ENCODE measurements at regions of chr14 and their contacts with region 1.

Region 1: DNA sequence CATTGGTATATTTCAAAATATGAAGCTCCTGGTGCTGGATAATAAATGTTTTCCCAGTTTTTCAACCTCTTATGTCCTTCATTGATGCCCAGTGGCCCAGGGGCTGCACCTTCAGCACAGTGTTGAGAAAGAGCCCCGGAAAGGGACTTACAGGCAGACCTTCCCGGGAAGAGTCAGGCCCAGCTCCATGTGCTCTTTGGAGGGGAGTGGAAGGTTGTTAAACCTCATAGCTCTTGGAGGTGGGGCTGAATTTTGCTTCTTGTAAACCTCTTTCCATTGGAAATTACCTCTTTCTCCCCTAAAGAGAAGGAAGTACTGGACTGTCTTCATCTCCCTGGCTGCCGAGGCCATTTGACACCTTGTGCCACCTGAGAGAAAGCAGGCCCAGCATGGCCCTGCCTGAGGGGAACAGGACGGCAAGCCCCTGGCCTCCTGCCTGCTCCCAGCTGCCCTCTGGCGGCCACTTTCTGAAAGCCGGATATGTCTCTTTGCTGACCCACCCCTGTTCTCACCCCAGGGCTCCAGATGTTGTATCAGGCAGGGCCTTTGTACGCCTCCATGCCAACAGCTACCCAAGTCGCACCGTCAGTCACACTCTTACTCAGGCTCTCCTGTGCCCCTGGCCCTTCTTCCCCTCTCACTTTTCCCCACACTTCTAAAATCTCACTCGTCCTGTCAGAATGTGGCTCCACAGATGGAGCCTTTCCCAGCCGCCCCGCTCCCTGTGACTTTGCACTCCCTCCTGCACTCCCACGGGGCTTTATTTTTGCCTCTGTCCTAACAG is 43.0 kb downstream of the EVL start:
- DNase-seq: peak; percentile 69 to 88
- ATAC-seq: peak; percentile 91 to 98
- H3K4me3 ChIP-seq: no peak overlapping the region
- H3K27ac ChIP-seq: peak overlapping the region; percentile 51 to 56; a peak in 4 of 6 replicates
- H3K4me1 ChIP-seq: peaks cover 27% of the 10 kb centered on the region
- CTCF ChIP-seq: peak; percentile 90
- EP300 ChIP-seq: no peak
- POLR2A ChIP-seq: no peak
- RAD21 ChIP-seq: peak; percentile 86 to 88

Region 2: DNA sequence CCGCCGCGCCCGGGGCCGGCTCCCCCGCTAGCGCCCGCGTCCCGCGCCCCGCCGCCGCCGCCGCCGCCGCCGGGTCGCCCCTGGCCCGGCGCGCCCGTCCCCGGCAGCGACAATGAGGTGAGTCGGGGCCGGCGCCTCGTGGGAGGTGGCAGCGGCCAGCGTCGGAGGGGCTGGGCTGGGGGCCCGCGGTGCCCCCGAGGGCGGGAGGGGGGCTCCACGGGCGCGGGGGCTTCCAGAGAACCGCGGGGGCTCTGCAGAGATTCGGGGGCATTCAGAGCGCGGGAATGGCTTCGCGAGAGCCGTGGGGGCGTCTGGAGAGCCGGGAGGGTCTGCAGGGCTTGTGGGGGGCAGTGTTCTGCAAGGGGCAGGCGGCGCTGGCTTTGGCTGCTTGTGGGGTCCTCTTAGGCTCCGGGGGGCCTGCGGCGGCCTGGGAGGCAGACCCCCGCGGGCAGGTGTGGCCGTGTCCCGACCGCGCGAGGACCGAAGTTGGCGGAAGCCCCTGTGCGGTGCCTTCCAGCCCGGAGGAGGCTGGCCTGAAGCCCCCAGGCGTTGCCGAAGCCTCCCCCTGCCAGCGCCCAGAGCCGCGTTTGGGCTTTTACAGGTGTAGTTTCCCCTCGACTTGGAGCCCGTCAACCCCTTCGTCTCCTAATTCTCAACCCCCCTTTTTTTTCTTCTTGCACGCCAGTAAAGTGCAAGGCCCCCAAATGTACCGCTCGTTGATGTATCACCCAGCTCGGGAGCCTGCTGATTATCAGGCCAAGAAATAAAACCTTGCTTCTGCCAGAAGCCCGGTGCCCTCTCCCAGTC is 136.1 kb before region 1 on chr14:
- CTCF ChIA-PET with region 1: interaction called, 18 read pairs
- POLR2A ChIA-PET with region 1: no interaction called
- DNase-seq: peak in 1 of 2 experiments; percentile 43
- ATAC-seq: peak; percentile 21 to 35; a peak in 5 of 6 replicates
- H3K4me3 ChIP-seq: peak overlapping the region; percentile 83
- H3K27ac ChIP-seq: peak overlapping the region; percentile 79 to 87
- H3K4me1 ChIP-seq: 0 out of 3 replicates have a peak, but pooled peaks cover 3% of the 10 kb centered on the region
- CTCF ChIP-seq: no peak
- EP300 ChIP-seq: no peak
- POLR2A ChIP-seq: no peak
- RAD21 ChIP-seq: no peak

Region 3: DNA sequence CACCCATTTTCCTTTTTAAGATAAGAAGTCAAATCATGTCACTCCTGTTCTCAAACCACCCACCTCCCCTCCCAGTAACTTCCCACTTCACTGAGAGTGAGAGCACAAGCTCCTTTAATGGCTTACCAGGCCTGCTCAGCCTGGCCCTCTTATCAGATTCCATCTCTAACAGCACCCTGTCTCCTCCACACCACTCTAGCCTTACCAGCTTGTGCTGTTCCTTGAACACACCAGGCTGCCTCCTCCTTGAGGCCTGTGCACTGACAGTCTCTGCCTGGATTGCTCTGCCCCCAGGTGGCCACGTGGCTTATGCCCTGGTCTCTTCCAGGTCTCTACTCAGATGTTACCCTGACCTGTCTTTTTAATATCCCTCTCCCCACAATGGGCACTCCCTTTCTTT is 83.1 kb before region 1 on chr14:
- CTCF ChIA-PET with region 1: interaction called, 29 read pairs
- POLR2A ChIA-PET with region 1: no interaction called
- DNase-seq: peak; percentile 49 to 73
- ATAC-seq: peak; percentile 94 to 95
- H3K4me3 ChIP-seq: no peak overlapping the region
- H3K27ac ChIP-seq: peak overlapping the region; percentile 45 to 67; a peak in 4 of 6 replicates
- H3K4me1 ChIP-seq: peaks cover 41% of the 10 kb centered on the region
- CTCF ChIP-seq: peak; percentile 62
- EP300 ChIP-seq: no peak
- POLR2A ChIP-seq: no peak
- RAD21 ChIP-seq: peak; percentile 67 to 79

Region 4: DNA sequence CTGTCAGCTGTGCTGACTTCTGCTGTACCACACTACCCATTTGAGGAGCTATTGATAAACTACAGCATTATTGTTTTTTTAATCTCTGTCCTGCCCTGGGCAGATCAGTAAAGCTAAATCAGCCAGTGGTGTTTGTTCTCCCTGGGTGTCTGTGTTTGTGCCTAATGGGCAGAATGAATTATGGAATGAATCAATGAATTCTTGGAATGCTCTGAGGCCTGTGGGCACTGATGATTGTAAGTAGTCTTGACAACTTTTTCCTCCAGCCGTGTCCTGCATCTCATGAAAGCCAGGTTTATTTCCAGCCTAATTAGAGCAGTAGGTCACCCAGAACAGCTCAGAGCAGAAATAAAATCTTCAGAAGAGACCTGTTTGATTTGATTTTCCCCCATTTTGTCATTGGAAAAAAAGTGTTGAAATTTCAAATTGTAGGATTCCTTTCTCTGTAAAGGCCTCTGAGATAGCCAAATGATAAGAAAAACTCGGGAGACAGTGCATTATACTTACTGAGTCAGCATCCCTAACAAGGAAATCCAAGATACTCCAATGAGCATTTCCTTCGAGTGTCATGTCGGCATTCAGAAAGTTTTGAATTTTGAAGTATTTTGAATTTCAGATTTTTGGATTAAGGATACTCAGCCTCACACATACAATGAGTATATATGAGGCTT is 62.5 kb before region 1 on chr14:
- CTCF ChIA-PET with region 1: interaction called, 12 read pairs
- POLR2A ChIA-PET with region 1: no interaction called
- DNase-seq: no peak
- ATAC-seq: no peak
- H3K4me3 ChIP-seq: no peak overlapping the region
- H3K27ac ChIP-seq: 0 out of 6 replicates have a peak overlapping the region, but pooled peaks of 1 of the 2 experiments have one; percentile 3
- H3K4me1 ChIP-seq: peaks cover 13% of the 10 kb centered on the region; the same call in 2 of the 3 replicates
- CTCF ChIP-seq: no peak
- EP300 ChIP-seq: no peak
- POLR2A ChIP-seq: no peak
- RAD21 ChIP-seq: no peak

Region 5: DNA sequence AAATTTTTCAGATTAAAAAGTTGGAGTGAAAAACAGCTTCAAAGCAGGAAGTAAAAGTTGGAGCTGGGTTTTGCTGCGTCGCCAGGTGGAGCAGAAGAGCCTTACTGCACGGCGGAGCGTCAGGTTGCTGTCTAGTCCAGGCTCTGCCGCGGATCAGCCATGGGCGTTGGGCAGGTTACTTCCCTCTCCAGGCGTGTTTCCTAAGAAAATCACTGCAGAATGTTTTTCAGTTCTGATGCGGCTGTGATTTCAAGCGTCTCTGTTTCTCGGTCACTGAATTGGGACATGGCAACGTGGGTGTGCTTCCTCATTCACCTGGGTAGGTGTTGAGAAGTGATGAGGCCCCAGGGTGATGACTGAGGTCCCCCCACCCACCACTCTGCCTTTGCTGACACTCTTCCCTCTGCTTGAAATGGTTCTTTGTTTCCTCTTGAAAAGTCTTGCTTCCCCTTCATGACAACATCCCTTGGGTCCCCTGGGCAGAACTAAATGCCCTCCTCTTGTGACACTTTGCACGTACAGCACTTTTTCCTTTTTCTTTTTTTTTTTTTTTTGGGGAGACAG is 35.4 kb before region 1 on chr14:
- CTCF ChIA-PET with region 1: interaction called, 52 read pairs
- POLR2A ChIA-PET with region 1: no interaction called
- DNase-seq: no peak
- ATAC-seq: no peak
- H3K4me3 ChIP-seq: no peak overlapping the region
- H3K27ac ChIP-seq: no peak overlapping the region
- H3K4me1 ChIP-seq: peaks cover 7% of the 10 kb centered on the region; the same call in 1 of the 3 replicates
- CTCF ChIP-seq: no peak
- EP300 ChIP-seq: no peak
- POLR2A ChIP-seq: no peak
- RAD21 ChIP-seq: no peak

Region 6: DNA sequence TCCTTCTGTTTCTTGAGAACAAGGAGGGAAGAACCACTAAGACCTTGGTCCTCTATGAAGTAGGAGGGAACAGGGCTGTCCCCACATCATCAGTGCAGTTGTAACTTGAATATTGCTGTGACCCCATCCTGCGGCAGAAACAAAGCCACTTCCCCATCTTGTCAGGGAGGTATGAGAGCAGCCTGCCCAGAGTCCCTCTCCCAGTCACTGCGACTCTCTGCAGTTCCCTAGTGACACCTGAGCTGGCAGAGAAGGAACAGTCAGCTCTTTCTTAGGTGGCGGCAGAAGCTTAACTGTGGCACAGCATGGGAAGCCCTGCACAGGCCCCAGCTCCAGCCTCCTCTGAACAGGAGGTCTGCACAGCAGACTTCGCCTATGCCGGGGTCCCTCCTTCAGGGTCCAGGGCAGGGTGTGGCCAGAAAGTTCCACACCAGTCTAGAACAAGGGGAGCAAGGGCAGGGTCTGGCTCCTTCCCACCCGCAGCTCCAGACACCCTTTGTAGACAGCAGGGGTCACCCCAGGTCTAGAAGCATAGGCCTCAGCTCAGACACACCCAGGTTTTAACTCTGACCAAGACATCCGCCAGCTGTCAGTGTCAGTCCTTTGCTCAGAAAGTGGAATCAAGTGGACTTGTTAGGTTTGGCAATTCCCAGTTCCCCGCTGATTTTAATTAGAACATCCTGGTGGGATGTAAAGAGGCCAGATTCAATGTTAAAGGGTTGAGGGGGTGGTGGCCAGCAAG is 14.4 kb after region 1 on chr14:
- CTCF ChIA-PET with region 1: interaction called, 72 read pairs
- POLR2A ChIA-PET with region 1: no interaction called
- DNase-seq: no peak
- ATAC-seq: peak; percentile 35 to 50; a peak in 3 of 6 replicates
- H3K4me3 ChIP-seq: no peak overlapping the region
- H3K27ac ChIP-seq: no peak overlapping the region
- H3K4me1 ChIP-seq: no peaks in the 10 kb centered on the region
- CTCF ChIP-seq: no peak
- EP300 ChIP-seq: no peak
- POLR2A ChIP-seq: no peak
- RAD21 ChIP-seq: 0 out of 5 replicates have a peak, but pooled peaks of 1 of the 2 experiments have one; percentile 31

Measured in A549 (cell line).